ENCODE measurements at regions of chr7 and their contacts with region 1.

Region 1: GRCh38 chr7:104923010-104923421 is 91.0 kb upstream of the KMT2E start:
- DNase-seq: peak; percentile 71
- ATAC-seq: peak; percentile 99
- H3K4me3 ChIP-seq: no peak overlapping the region
- H3K27ac ChIP-seq: no peak overlapping the region
- H3K4me1 ChIP-seq: peaks cover 6% of the 10 kb centered on the region; the same call in 1 of the 2 replicates
- H3K27me3 ChIP-seq: no peaks in the 10 kb centered on the region
- CTCF ChIP-seq: peak; percentile 86 to 98 (median 89); a peak in 5 of 6 replicates
- EP300 ChIP-seq: no peak
- POLR2A ChIP-seq: no peak
- RAD21 ChIP-seq: peak; percentile 97

Region 2: GRCh38 chr7:104272767-104273384 is 650.1 kb before region 1 on chr7:
- CTCF ChIA-PET with region 1: interaction called, 7 read pairs
- POLR2A ChIA-PET with region 1: no interaction called
- RAD21 ChIA-PET with region 1: interaction called, 3 read pairs
- SMC1A ChIA-PET with region 1: interaction called, 5 read pairs
- in situ Hi-C with region 1: no loop called
- intact Hi-C with region 1: loop called (anchors 1 kb)
- DNase-seq: no peak
- ATAC-seq: peak; percentile 62
- H3K4me3 ChIP-seq: no peak overlapping the region
- H3K27ac ChIP-seq: no peak overlapping the region
- H3K4me1 ChIP-seq: no peaks in the 10 kb centered on the region
- H3K27me3 ChIP-seq: no peaks in the 10 kb centered on the region
- CTCF ChIP-seq: peak; percentile 52 to 61 (median 57)
- EP300 ChIP-seq: no peak
- POLR2A ChIP-seq: no peak
- RAD21 ChIP-seq: peak; percentile 63

Region 3: GRCh38 chr7:104486931-104487330 is 436.1 kb before region 1 on chr7:
- CTCF ChIA-PET with region 1: no interaction called
- POLR2A ChIA-PET with region 1: no interaction called
- RAD21 ChIA-PET with region 1: no interaction called
- SMC1A ChIA-PET with region 1: no interaction called
- in situ Hi-C with region 1: no loop called
- intact Hi-C with region 1: no loop called
- DNase-seq: no peak
- ATAC-seq: no peak
- H3K4me3 ChIP-seq: no peak overlapping the region
- H3K27ac ChIP-seq: no peak overlapping the region
- H3K4me1 ChIP-seq: no peaks in the 10 kb centered on the region
- H3K27me3 ChIP-seq: no peaks in the 10 kb centered on the region
- CTCF ChIP-seq: no peak
- EP300 ChIP-seq: no peak
- POLR2A ChIP-seq: no peak
- RAD21 ChIP-seq: no peak

Region 4: DNA sequence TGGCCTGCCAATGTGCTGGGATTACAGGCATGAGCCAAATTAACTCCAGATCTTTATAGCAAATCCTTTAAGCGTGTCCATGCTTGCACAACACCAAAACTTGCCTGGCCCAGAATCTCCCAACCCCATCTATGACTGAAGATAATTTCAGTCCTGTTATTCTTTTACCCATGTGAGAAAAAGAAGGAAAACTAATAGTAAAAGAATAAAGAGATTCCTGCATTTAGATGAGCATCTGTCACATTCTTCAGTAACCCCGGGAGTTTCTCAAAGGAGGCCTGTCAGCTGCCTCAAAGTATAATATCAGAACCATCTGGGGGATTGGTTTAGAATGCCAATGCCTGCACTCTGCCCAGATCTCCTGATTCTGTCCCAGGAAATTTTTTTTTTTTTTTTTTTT is 67.2 kb before region 1 on chr7:
- CTCF ChIA-PET with region 1: interaction called, 33 read pairs
- POLR2A ChIA-PET with region 1: no interaction called
- RAD21 ChIA-PET with region 1: interaction called, 8 read pairs
- SMC1A ChIA-PET with region 1: interaction called, 20 read pairs
- in situ Hi-C with region 1: no loop called
- intact Hi-C with region 1: no loop called
- DNase-seq: no peak
- ATAC-seq: no peak
- H3K4me3 ChIP-seq: no peak overlapping the region
- H3K27ac ChIP-seq: no peak overlapping the region
- H3K4me1 ChIP-seq: peaks cover 10% of the 10 kb centered on the region
- H3K27me3 ChIP-seq: no peaks in the 10 kb centered on the region
- CTCF ChIP-seq: no peak
- EP300 ChIP-seq: no peak
- POLR2A ChIP-seq: no peak
- RAD21 ChIP-seq: no peak

Region 5: GRCh38 chr7:104890216-104890615 is 32.8 kb before region 1 on chr7:
- CTCF ChIA-PET with region 1: interaction called, 581 read pairs
- POLR2A ChIA-PET with region 1: interaction called, 3 read pairs
- RAD21 ChIA-PET with region 1: interaction called, 217 read pairs
- SMC1A ChIA-PET with region 1: interaction called, 413 read pairs
- in situ Hi-C with region 1: no loop called
- intact Hi-C with region 1: no loop called
- DNase-seq: no peak
- ATAC-seq: peak; percentile 5; the same call in 1 of the 3 replicates
- H3K4me3 ChIP-seq: no peak overlapping the region
- H3K27ac ChIP-seq: no peak overlapping the region
- H3K4me1 ChIP-seq: peaks cover 43% of the 10 kb centered on the region
- H3K27me3 ChIP-seq: no peaks in the 10 kb centered on the region
- CTCF ChIP-seq: no peak
- EP300 ChIP-seq: no peak
- POLR2A ChIP-seq: no peak
- RAD21 ChIP-seq: no peak

Region 6: DNA sequence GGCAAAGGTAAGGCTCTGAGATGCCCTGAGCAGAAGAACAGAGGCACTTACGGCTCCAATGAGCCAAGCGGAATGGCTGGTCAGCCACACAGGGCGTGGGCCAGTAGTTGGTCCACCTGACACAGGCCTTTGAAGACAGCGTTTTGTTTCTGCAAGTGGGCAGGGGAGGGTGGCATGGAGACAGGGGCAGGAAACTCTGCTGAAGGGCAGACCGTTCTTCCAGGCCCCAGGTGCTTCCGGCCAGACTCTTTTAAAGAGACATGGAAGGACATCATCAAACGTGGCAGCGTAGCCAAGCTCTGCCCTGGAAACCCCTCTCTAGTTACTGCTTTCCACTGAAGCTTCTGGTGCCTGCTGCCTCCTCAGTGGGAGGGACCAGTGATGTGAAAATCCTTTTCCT is 13.5 kb after region 1 on chr7:
- CTCF ChIA-PET with region 1: interaction called, 23 read pairs
- POLR2A ChIA-PET with region 1: interaction called, 4 read pairs
- RAD21 ChIA-PET with region 1: interaction called, 17 read pairs
- SMC1A ChIA-PET with region 1: interaction called, 13 read pairs
- in situ Hi-C with region 1: no loop called
- intact Hi-C with region 1: no loop called
- DNase-seq: no peak
- ATAC-seq: no peak
- H3K4me3 ChIP-seq: no peak overlapping the region
- H3K27ac ChIP-seq: no peak overlapping the region
- H3K4me1 ChIP-seq: peaks cover 6% of the 10 kb centered on the region
- H3K27me3 ChIP-seq: no peaks in the 10 kb centered on the region
- CTCF ChIP-seq: no peak
- EP300 ChIP-seq: no peak
- POLR2A ChIP-seq: no peak
- RAD21 ChIP-seq: no peak

Region 7: DNA sequence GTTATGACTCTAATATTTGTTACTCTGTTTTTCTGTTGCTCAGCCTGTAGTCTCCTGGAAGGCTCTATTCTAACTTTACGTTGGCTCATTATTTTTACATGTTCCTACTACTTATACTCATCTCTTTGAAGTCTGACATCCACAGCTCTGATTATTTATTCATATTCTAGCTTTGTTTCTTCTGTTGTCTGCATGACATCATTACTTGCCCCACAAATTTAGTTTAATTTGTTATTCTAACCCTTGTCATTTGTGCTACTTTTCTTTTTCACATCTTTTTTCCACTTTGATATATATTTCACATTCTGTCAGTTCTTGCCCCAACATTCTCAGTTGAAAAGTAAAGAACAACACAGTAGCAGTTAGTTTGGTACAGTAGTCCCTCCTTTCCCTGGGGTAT is 142.1 kb after region 1 on chr7:
- CTCF ChIA-PET with region 1: no interaction called
- POLR2A ChIA-PET with region 1: no interaction called
- RAD21 ChIA-PET with region 1: no interaction called
- SMC1A ChIA-PET with region 1: no interaction called
- in situ Hi-C with region 1: no loop called
- intact Hi-C with region 1: no loop called
- DNase-seq: no peak
- ATAC-seq: no peak
- H3K4me3 ChIP-seq: no peak overlapping the region
- H3K27ac ChIP-seq: no peak overlapping the region
- H3K4me1 ChIP-seq: no peaks in the 10 kb centered on the region
- H3K27me3 ChIP-seq: no peaks in the 10 kb centered on the region
- CTCF ChIP-seq: no peak
- EP300 ChIP-seq: no peak
- POLR2A ChIP-seq: no peak
- RAD21 ChIP-seq: no peak

Region 8: DNA sequence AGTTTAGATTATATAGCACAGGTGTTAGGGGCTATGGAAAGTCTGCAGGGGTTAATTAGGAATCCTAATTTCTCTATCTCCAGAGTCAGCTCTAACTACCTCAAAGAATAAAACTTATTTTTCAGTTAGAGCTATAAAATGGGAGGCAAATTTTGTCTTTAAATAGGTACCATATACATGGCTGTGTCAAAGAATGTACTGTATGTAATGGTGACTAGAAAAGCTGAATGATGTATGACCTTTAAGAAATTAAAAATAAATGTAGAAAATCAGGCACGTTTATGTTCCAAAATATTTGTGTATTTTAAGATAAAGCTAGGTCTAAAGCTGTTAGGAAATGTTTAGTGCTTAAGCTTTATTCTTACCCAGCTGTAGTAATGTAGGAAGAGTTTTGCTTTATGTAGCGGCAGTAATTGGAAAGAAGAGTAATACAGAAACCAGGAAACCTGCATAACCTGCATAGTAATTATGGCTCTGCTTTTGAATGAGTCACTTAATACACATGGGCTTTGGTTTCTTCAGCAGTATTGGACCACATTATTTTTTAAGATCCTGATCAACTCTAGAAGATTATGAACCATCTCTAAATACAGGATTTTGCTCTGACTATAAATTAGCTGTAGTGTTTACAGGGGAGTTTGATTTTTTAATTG is 176.0 kb after region 1 on chr7:
- CTCF ChIA-PET with region 1: interaction called, 9 read pairs
- POLR2A ChIA-PET with region 1: no interaction called
- RAD21 ChIA-PET with region 1: interaction called, 3 read pairs
- SMC1A ChIA-PET with region 1: interaction called, 3 read pairs
- in situ Hi-C with region 1: no loop called
- intact Hi-C with region 1: loop called (anchors 5 kb)
- DNase-seq: no peak
- ATAC-seq: peak; percentile 81
- H3K4me3 ChIP-seq: no peak overlapping the region
- H3K27ac ChIP-seq: no peak overlapping the region
- H3K4me1 ChIP-seq: peaks cover 26% of the 10 kb centered on the region; the same call in 1 of the 2 replicates
- H3K27me3 ChIP-seq: no peaks in the 10 kb centered on the region
- CTCF ChIP-seq: no peak
- EP300 ChIP-seq: 0 out of 4 replicates have a peak, but pooled peaks of 1 of the 2 experiments have one; percentile 34
- POLR2A ChIP-seq: no peak
- RAD21 ChIP-seq: no peak

Region 9: DNA sequence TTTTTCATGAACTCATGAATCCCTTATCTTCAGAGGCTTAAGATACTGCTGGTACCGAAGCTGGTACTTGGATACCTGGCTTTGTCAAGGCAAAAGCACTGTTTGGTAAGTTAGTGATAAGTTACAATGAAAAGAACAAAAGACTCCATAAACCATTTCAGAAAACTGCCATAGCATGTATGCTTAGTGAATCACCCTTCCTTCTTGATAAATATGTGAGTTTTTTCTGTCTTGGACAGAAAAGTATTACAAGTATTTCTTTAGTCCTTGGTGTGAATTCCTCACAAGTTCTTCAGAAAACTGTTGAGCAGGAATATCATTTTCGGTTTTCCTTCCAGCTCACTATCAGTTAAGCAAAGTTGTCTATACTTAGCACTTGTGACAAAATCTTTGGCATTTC is 573.5 kb after region 1 on chr7:
- CTCF ChIA-PET with region 1: no interaction called
- POLR2A ChIA-PET with region 1: no interaction called
- RAD21 ChIA-PET with region 1: no interaction called
- SMC1A ChIA-PET with region 1: no interaction called
- in situ Hi-C with region 1: no loop called
- intact Hi-C with region 1: no loop called
- DNase-seq: no peak
- ATAC-seq: no peak
- H3K4me3 ChIP-seq: no peak overlapping the region
- H3K27ac ChIP-seq: no peak overlapping the region
- H3K4me1 ChIP-seq: no peaks in the 10 kb centered on the region
- H3K27me3 ChIP-seq: no peaks in the 10 kb centered on the region
- CTCF ChIP-seq: no peak
- EP300 ChIP-seq: no peak
- POLR2A ChIP-seq: no peak
- RAD21 ChIP-seq: no peak

Region 10: GRCh38 chr7:105648561-105649401 is 725.8 kb after region 1 on chr7:
- CTCF ChIA-PET with region 1: no interaction called
- POLR2A ChIA-PET with region 1: no interaction called
- RAD21 ChIA-PET with region 1: no interaction called
- SMC1A ChIA-PET with region 1: no interaction called
- in situ Hi-C with region 1: no loop called
- intact Hi-C with region 1: no loop called
- DNase-seq: no peak
- ATAC-seq: no peak
- H3K4me3 ChIP-seq: no peak overlapping the region
- H3K27ac ChIP-seq: no peak overlapping the region
- H3K4me1 ChIP-seq: no peaks in the 10 kb centered on the region
- H3K27me3 ChIP-seq: no peaks in the 10 kb centered on the region; a peak in 2 of 4 replicates
- CTCF ChIP-seq: no peak
- EP300 ChIP-seq: no peak
- POLR2A ChIP-seq: no peak
- RAD21 ChIP-seq: no peak